ENCODE measurements at regions of chr14 and their contacts with region 1.

Region 1: DNA sequence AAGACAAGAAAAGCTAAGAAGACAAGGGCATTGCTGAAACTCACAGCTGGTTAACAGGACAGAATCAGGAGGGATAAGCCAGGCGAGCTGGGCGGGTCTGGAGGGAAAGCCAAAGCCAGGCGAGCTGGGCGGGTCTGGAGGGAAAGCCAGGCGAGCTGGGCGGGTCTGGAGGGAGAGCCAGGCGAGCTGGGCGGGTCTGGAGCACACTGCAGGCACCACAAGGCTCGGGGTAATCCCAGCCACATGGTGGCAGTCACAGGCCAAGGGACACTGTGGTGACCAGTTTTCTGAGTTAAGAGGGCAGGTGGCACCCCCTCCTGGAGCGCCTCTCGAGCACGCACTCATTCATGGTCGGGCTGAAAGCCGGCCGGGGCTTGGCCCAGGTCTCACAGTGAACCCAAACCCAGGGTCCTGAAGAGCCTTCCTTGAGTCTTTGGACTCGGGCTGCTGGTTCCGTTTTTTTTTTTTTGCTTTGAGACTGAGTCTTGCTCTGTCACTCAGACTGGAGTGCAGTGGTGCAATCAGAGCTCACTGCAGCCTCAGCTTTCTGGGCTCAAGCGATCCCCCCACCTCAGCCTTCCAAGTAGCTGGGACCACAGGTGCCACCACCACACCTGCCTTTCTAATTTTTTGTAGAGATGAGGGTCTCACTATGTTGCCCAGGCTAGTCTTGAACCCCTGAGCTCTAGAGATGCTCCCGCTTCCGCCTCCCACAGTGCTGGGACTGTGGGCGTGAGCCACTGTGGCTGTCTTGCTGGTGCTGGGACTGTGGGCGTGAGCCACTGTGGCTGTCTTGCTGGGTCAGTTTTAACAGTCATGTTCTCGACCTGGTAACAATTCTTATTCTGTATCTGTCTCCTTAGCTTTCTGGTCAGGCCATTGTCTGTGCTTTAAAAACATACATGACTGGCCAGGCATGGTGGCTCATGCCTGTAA is 40.2 kb downstream of the HSP90AA1 start:
- DNase-seq: peak; percentile 98 to 100
- H3K4me3 ChIP-seq: no peak overlapping the region
- H3K27ac ChIP-seq: no peak overlapping the region
- H3K4me1 ChIP-seq: peaks cover 3% of the 10 kb centered on the region
- H3K27me3 ChIP-seq: no peaks in the 10 kb centered on the region
- CTCF ChIP-seq: peak; percentile 84

Region 2: GRCh38 chr14:102034301-102034700 is 12.3 kb before region 1 on chr14:
- CTCF ChIA-PET with region 1: interaction called, 13 read pairs
- POLR2A ChIA-PET with region 1: interaction called, 9 read pairs
- intact Hi-C with region 1: no loop called
- DNase-seq: peak; percentile 95 to 99
- H3K4me3 ChIP-seq: no peak overlapping the region
- H3K27ac ChIP-seq: peak overlapping the region; percentile 56
- H3K4me1 ChIP-seq: peaks cover 38% of the 10 kb centered on the region
- H3K27me3 ChIP-seq: no peaks in the 10 kb centered on the region
- CTCF ChIP-seq: no peak

Region 3: DNA sequence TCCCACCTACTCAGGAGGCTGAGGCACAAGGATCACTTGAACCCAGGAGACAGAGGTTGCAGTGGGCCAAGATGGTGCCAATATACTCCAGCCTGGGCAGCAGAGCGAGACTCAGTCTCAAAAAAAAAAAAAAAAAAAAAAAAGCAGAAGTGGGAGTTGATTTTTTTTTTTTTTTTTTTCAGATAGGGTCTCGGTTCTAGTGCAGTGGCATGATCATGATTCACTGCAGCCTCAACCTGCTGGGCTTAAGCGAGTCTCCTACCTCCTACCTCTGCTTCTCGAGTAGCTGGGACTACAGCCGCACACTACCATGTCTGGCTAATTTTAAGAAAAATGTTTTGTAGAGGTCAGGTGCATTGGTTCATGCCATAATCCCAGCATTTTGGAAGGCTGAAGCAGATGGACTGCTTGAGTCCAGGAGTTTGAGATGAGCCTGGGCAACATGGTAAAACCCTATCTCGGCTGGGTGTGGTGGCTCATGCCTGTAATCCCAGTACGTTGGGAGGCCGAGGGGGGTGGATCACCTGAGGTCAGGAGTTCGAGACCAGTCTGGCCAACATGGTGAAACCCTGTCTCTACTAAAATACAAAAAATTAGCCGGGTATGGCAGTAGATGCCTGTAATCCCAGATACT is 56.6 kb after region 1 on chr14:
- CTCF ChIA-PET with region 1: interaction called, 13 read pairs
- POLR2A ChIA-PET with region 1: no interaction called
- intact Hi-C with region 1: no loop called
- DNase-seq: no peak
- H3K4me3 ChIP-seq: no peak overlapping the region
- H3K27ac ChIP-seq: no peak overlapping the region
- H3K4me1 ChIP-seq: peaks cover 12% of the 10 kb centered on the region
- H3K27me3 ChIP-seq: no peaks in the 10 kb centered on the region
- CTCF ChIP-seq: no peak

Region 4: GRCh38 chr14:102220031-102220430 is 173.4 kb after region 1 on chr14:
- CTCF ChIA-PET with region 1: no interaction called
- POLR2A ChIA-PET with region 1: no interaction called
- intact Hi-C with region 1: loop called (anchors 5 kb)
- DNase-seq: no peak
- H3K4me3 ChIP-seq: no peak overlapping the region
- H3K27ac ChIP-seq: no peak overlapping the region
- H3K4me1 ChIP-seq: peaks cover 19% of the 10 kb centered on the region
- H3K27me3 ChIP-seq: no peaks in the 10 kb centered on the region
- CTCF ChIP-seq: no peak